Activated CD4-positive, alpha-beta T cell treated with anti-CD3 and anti-CD28 coated beads, Interleukin-2, amount 10 ng/mL, durations not matched to agents 24 days and 14 days (primary cell): ENCODE measurements at regions of chr15 and their contacts with region 1.

Region 1: DNA sequence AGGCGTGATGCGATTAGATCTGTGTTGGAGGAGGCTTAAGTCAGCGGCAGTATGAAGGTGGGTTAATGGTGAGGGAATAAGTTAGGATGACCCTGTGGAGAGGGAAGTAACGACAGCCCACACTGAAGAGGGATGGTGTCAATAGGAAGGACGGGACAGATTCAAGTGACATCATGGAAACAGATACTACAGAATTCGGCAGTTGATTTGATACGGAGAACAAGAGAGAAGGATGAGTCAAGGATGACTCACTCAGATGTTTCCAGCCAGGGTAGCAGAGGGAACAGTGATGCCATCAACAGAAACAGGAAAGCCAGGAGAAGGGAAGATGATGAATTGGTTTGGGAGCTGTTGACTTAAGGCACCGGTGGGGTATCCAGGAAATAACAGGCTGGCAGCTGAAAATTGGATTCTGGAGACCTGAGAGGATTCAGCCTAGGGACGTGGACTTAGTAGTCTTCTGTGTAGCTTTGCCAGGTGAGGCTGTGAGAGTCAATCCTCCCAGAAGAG is 38.0 kb downstream of the SHC4 start:
- DNase-seq: peak; percentile 70
- H3K4me3 Mint-ChIP-seq: peak overlapping the region; percentile 46
- H3K27ac Mint-ChIP-seq: peak overlapping the region; percentile 97
- H3K4me1 Mint-ChIP-seq: peaks cover 61% of the 10 kb centered on the region
- H3K27me3 Mint-ChIP-seq: peaks cover 2% of the 10 kb centered on the region

Region 2: GRCh38 chr15:48730506-48730905 is 195.3 kb before region 1 on chr15:
- intact Hi-C with region 1: no loop called
- DNase-seq: no peak
- H3K4me3 Mint-ChIP-seq: no peak overlapping the region
- H3K27ac Mint-ChIP-seq: no peak overlapping the region
- H3K4me1 Mint-ChIP-seq: no peaks in the 10 kb centered on the region
- H3K27me3 Mint-ChIP-seq: no peaks in the 10 kb centered on the region

Region 3: GRCh38 chr15:48888836-48889235 is 36.9 kb before region 1 on chr15:
- intact Hi-C with region 1: loop called (anchors 1 kb)
- DNase-seq: no peak
- H3K4me3 Mint-ChIP-seq: no peak overlapping the region
- H3K27ac Mint-ChIP-seq: peak overlapping the region; percentile 3
- H3K4me1 Mint-ChIP-seq: peaks cover 21% of the 10 kb centered on the region
- H3K27me3 Mint-ChIP-seq: peaks cover 2% of the 10 kb centered on the region

Region 4: GRCh38 chr15:48905847-48906246 is 19.9 kb before region 1 on chr15:
- intact Hi-C with region 1: loop called (anchors 2 kb)
- DNase-seq: no peak
- H3K4me3 Mint-ChIP-seq: no peak overlapping the region
- H3K27ac Mint-ChIP-seq: peak overlapping the region; percentile 81
- H3K4me1 Mint-ChIP-seq: peaks cover 30% of the 10 kb centered on the region
- H3K27me3 Mint-ChIP-seq: no peaks in the 10 kb centered on the region

Region 5: GRCh38 chr15:48940448-48940893 is 14.7 kb after region 1 on chr15:
- intact Hi-C with region 1: loop called (anchors 1 kb)
- DNase-seq: no peak
- H3K4me3 Mint-ChIP-seq: no peak overlapping the region
- H3K27ac Mint-ChIP-seq: peak overlapping the region; percentile 49
- H3K4me1 Mint-ChIP-seq: peaks cover 31% of the 10 kb centered on the region
- H3K27me3 Mint-ChIP-seq: no peaks in the 10 kb centered on the region

Region 6: DNA sequence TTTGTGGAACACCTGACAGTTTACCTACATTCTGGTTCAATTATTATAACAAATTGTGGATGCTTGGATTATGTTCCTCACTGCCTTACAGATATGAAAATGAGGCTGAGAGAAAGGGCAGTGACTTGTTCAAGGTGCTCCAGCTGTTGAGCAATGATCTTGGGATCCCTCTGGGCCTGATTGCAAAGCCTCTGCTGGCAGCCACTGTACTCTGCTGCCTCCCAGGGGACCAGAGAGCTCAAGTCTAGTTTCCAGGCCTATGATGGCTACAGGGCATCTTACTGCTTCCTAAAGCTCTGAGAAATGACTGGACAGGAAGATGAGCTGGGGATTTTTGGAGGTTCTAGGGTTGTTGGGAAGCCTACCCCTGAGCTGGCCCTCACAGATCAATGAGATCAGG is 40.2 kb after region 1 on chr15:
- intact Hi-C with region 1: loop called (anchors 1 kb)
- DNase-seq: peak; percentile 72
- H3K4me3 Mint-ChIP-seq: peak overlapping the region; percentile 58
- H3K27ac Mint-ChIP-seq: peak overlapping the region; percentile 93
- H3K4me1 Mint-ChIP-seq: peaks cover 53% of the 10 kb centered on the region
- H3K27me3 Mint-ChIP-seq: peaks cover 2% of the 10 kb centered on the region